ENCODE measurements at regions of chr7 and their contacts with region 1.

Region 1: GRCh38 chr7:26880852-26881251 is 16.5 kb upstream of the SKAP2 start:
- DNase-seq: no peak
- H3K4me3 ChIP-seq: no peak overlapping the region
- H3K27ac ChIP-seq: no peak overlapping the region
- H3K4me1 ChIP-seq: no peaks in the 10 kb centered on the region
- H3K27me3 ChIP-seq: no peaks in the 10 kb centered on the region
- CTCF ChIP-seq: no peak

Region 2: DNA sequence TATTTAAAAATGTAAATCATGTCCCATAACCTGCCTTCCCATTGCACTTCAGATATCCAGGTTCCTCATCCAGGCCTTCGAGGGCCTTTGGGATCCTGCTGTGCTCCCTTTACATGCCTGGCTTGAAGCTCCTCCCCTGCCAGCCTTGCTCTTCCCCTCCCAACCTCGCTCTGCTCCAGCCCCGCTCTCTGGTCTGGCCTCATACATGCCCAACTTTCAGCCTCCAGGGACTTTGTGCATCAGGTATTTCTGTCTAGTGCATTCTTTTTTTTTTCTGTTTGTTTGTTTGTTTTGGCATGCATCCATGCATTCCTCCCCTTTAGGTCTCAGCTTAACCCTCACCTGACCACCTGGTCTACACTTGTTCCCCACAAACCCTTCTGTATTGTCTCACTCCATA is 428.9 kb before region 1 on chr7:
- CTCF ChIA-PET with region 1: no interaction called
- dilution Hi-C with region 1: no loop called
- in situ Hi-C with region 1: no loop called
- intact Hi-C with region 1: no loop called
- DNase-seq: no peak
- H3K4me3 ChIP-seq: no peak overlapping the region
- H3K27ac ChIP-seq: no peak overlapping the region
- H3K4me1 ChIP-seq: peaks cover 3% of the 10 kb centered on the region
- H3K27me3 ChIP-seq: no peaks in the 10 kb centered on the region
- CTCF ChIP-seq: no peak

Region 3: GRCh38 chr7:26978146-26978545 is 97.3 kb after region 1 on chr7:
- CTCF ChIA-PET with region 1: no interaction called
- dilution Hi-C with region 1: loop called (anchors 5 kb)
- in situ Hi-C with region 1: no loop called
- intact Hi-C with region 1: no loop called
- DNase-seq: no peak
- H3K4me3 ChIP-seq: no peak overlapping the region
- H3K27ac ChIP-seq: no peak overlapping the region
- H3K4me1 ChIP-seq: no peaks in the 10 kb centered on the region
- H3K27me3 ChIP-seq: no peaks in the 10 kb centered on the region
- CTCF ChIP-seq: no peak